Aorta (tissue), 5 donors: ENCODE measurements at regions of chr16 and their contacts with region 1.

Region 1: DNA sequence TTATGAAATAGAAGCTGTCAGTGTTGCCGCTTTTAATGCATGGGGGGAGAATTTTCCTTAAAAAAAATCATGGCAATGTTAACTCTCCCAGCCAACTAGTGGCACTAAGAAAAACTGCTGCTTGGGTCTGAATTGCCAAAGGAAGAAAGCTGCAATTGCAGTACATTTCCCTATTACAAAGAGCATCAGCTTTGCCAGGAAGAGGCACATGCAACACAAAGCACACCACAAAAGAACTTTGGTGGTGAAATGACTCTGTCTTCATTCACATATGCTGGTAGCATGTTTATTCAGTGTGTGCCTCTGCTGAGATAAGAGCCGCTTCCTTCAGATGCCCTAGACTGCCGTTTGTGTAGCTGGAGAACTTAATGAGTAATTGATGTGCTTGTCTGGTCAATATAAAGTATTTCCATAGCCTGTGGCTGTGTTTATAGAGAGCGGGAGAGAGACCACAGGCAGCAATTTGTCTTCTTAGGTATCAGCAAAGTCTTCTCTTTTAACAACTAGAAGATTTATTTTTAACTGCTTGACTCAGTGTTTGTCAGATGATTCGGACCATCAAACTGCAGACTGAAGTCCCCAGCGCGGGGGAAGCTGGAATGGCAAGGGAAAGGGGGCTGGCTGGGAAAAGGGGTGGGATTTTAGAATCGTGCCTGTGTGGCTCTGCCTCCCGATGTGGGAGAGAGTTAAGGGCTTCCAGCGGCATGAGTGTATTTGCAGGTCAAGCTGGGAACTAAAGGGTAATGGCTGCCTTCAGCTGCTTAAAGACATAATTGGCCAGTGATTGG is 115.1 kb downstream of the MRTFB start:
- DNase-seq: peak; percentile 58 to 81
- ATAC-seq: peak; percentile 80
- H3K4me3 ChIP-seq: peak overlapping the region; percentile 26 to 66
- H3K27ac ChIP-seq: peak overlapping the region; percentile 11 to 62
- H3K4me1 ChIP-seq: peaks cover 2 to 4% of the 10 kb centered on the region in 2 donors
- H3K27me3 ChIP-seq: no peaks in the 10 kb centered on the region

Region 2: DNA sequence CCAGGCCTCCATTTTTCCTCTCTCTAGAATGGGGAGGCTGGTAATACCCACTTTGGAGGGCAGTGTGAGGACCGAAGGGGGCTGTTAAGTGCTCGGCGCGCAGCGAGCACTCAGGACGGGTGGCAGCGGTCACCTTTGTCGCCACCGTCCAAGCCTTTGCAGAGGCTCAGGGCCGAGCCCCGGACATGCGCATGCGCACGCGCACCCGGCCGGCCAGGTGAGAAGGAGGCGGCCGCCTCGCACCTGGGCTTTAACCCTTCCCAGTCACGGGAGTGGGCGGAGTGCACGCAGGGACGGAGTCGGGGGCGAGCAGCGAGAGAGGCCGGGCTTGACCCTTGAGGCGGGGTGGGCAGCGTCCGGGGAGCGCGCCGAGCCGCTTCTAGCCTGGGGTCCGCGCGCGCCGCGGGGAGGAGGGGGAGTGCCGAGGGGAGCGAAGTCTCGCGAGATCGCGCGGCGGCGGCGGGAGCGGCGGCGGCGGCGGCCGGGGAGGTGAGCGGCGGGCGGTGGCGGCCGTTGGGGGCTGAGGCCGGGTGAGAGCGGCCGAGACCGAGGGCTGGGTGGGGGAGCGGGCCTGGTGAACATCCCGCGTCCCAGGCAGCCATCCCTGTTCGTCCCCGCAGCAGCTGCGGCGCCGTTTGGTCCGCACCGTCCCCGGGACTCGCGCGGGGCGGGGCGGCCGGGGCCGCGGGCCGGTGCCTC is 115.2 kb before region 1 on chr16 and contains the start of gene MRTFB:
- intact Hi-C with region 1: loop called (anchors 5 to 10 kb)
- DNase-seq: peak; percentile 84 to 95
- ATAC-seq: peak; percentile 91
- H3K4me3 ChIP-seq: peak within 1 kb of the TSS; percentile 27 to 89
- H3K27ac ChIP-seq: no peak within 1 kb of the TSS
- H3K4me1 ChIP-seq: no peaks in the 10 kb centered on the region
- H3K27me3 ChIP-seq: no peaks in the 10 kb centered on the region
- total RNA-seq, gene MRTFB: 61.1 to 108 TPM

Region 3: GRCh38 chr16:14077918-14078317 is 108.3 kb before region 1 on chr16:
- intact Hi-C with region 1: loop called (anchors 5 to 10 kb)
- DNase-seq: no peak
- ATAC-seq: no peak
- H3K4me3 ChIP-seq: no peak overlapping the region
- H3K27ac ChIP-seq: no peak overlapping the region
- H3K4me1 ChIP-seq: no peaks in the 10 kb centered on the region
- H3K27me3 ChIP-seq: no peaks in the 10 kb centered on the region

Region 4: GRCh38 chr16:14121142-14121541 is 65.1 kb before region 1 on chr16:
- intact Hi-C with region 1: no loop called
- DNase-seq: no peak
- ATAC-seq: no peak
- H3K4me3 ChIP-seq: no peak overlapping the region
- H3K27ac ChIP-seq: no peak overlapping the region
- H3K4me1 ChIP-seq: no peaks in the 10 kb centered on the region
- H3K27me3 ChIP-seq: no peaks in the 10 kb centered on the region